PC-9 (cell line): ENCODE measurements at regions of chr6 and their contacts with region 1.

Region 1: DNA sequence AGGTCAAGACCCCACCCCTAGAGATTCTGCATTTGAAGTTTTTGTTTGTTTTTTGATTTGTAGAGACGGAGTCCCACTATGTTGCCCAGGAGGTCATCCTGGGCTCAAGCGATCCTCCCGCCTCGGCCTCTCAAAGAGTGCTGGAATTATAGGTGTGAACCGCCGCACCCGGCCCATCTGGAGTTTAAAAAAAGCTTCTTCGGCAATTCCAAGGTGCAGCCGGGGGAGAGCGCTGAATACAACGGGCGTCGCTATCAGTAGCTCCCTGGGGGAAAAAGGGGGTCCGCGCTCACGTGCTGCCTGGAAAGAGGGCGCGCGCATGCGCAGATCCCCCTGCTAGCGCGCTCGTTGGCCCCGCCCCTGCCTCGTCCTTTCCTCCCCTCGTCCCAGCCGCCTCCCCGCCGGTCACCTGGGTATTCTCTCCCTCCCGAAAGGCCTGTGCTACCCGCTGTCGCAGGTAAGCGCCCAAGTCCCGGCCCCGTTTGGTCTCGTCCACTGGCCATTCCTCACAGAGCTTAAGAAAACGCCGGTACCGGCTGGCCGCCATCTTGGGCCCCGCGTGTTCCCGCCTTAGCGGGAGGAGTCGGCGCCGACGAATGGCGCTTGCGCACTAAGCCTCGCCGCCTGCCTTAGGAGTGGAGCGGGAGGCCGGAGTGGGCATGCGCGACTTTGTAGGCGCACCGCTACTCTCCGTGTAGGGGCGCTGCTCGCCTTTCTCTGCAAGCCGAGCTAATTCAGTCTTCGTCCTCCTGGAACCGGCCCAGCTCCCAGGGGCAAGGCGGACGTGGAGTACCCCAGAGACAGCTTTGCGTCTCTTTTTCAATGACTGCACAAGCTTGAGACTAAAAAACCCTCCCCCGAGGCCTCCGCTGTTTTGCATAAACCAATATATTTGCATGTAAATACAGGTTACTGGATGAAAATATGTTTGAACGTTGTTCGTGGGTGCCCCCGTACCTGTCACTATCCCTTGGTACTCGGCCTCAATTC is at the start of gene UQCC2:
- DNase-seq: peak; percentile 85 to 95
- H3K4me3 ChIP-seq: peak within 1 kb of the TSS; percentile 74
- H3K27ac ChIP-seq: peak within 1 kb of the TSS; percentile 78
- H3K4me1 ChIP-seq: peaks cover 30% of the 10 kb centered on the region
- H3K27me3 ChIP-seq: no peaks in the 10 kb centered on the region
- CTCF ChIP-seq: peak; percentile 76
- total RNA-seq, gene UQCC2: 71.2 and 72.9 TPM in 2 replicates

Region 2: GRCh38 chr6:33566182-33567084 is 145.0 kb before region 1 on chr6:
- CTCF ChIA-PET with region 1: no interaction called
- POLR2A ChIA-PET with region 1: no interaction called
- intact Hi-C with region 1: no loop called
- DNase-seq: no peak
- H3K4me3 ChIP-seq: no peak overlapping the region
- H3K27ac ChIP-seq: no peak overlapping the region
- H3K4me1 ChIP-seq: 0 out of 2 replicates have a peak, but pooled peaks cover 5% of the 10 kb centered on the region
- H3K27me3 ChIP-seq: no peaks in the 10 kb centered on the region
- CTCF ChIP-seq: no peak

Region 3: GRCh38 chr6:33579828-33580714 is 131.4 kb before region 1 on chr6 and contains the start of gene BAK1:
- CTCF ChIA-PET with region 1: no interaction called
- POLR2A ChIA-PET with region 1: interaction called, 10 read pairs
- intact Hi-C with region 1: no loop called
- DNase-seq: peak; percentile 84 to 87
- H3K4me3 ChIP-seq: peak within 1 kb of the TSS; percentile 98
- H3K27ac ChIP-seq: no peak within 1 kb of the TSS
- H3K4me1 ChIP-seq: peaks cover 15% of the 10 kb centered on the region
- H3K27me3 ChIP-seq: no peaks in the 10 kb centered on the region
- CTCF ChIP-seq: peak; percentile 59
- total RNA-seq, gene BAK1: 24.6 and 28.4 TPM in 2 replicates

Region 4: DNA sequence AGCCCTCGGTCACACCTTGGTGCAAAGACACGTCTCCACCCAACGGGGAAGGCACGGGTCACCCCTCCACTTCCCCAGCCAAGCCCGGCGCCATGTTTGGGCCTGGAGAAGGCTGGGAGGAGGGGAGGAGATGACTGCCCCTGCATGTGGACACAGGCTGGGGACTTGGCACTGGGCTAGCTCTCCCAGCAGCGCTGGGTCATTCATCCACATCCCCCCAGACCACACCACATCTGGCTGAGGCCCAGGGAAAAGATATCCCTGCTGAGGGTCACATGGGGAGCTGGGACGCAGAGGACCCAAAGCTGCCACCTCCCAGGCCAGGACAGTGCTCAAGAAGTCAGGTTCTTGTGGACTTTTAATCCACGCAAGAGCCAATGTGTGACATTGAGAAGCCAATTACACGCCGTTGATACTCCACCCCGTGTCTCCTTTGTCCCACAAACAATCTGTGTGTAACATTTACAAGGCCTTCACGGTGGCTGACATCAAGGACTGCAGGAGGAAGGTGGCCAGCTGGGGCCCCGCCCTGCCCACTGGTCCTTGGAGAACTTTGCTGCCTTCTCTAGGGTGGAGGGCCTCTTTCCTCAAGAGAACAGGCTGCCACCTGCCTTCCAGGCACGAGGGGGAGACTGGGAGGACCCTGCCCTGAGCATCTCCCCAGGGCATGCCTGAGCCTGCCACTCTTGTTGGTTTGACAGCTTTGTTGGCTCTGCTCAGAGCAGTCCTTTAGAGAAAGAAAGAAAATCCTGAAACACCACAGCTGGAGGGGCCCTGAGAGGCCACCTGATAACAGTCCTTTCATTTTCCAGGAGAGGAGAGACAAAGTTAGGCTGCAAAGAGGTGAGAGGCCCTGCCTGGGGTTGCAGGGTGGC is 40.6 kb after region 1 on chr6:
- CTCF ChIA-PET with region 1: interaction called, 11 read pairs
- POLR2A ChIA-PET with region 1: no interaction called
- intact Hi-C with region 1: no loop called
- DNase-seq: peak in 1 of 2 experiments; percentile 37
- H3K4me3 ChIP-seq: no peak overlapping the region
- H3K27ac ChIP-seq: no peak overlapping the region
- H3K4me1 ChIP-seq: peaks cover 41% of the 10 kb centered on the region
- H3K27me3 ChIP-seq: no peaks in the 10 kb centered on the region
- CTCF ChIP-seq: no peak

Region 5: DNA sequence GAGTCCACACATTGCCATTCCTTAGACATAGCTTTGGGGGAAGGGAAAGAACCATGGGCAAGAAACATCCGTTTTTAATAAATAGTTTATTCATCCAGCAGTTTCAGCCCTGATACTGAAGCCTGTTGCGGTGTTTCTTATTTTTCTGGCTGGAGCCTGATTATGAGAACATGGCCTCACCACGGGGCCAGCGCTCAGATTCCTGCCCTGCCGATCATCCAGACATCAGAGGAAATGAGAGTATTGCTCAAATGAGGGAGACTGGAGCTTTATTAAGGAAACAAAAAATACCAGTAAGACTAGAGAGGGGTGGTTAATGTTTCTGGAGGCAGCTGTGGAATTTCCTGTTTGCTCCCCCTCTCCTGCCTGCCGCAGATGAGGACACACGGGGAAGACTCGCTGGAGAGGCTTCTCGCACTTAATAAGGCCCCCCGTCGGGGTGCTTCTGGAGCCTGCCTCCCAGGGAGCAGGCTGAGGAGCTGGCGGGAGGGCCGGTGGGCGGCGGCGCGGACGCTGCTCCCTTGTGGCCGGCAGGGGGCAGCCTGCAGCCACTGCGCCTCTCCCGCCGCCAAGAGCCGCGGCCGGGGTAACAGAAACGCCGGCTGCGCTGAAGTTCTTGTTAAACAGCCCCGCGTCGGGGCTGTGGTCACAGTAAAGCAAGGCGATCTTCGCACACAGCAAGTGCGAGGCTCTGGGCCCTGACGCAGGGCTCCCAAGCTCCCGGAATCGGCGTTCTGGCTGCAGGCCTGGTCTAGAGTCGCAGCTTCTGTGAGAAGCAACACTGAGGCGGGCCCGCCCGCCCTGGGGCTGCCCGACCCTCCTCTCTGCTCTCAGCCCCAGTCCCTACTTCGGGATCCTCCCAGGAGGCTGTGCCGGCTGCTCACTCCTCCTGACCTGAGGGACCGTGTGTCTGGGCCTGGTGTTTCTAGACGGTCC is 60.0 kb after region 1 on chr6:
- CTCF ChIA-PET with region 1: interaction called, 16 read pairs
- POLR2A ChIA-PET with region 1: no interaction called
- intact Hi-C with region 1: no loop called
- DNase-seq: peak; percentile 76 to 79
- H3K4me3 ChIP-seq: no peak overlapping the region
- H3K27ac ChIP-seq: 0 out of 2 replicates have a peak overlapping the region, but pooled peaks have one; percentile 15
- H3K4me1 ChIP-seq: peaks cover 19% of the 10 kb centered on the region
- H3K27me3 ChIP-seq: no peaks in the 10 kb centered on the region
- CTCF ChIP-seq: peak; percentile 90

Region 6: GRCh38 chr6:34154668-34155447 is 443.4 kb after region 1 on chr6:
- CTCF ChIA-PET with region 1: interaction called, 9 read pairs
- POLR2A ChIA-PET with region 1: no interaction called
- intact Hi-C with region 1: loop called (anchors 2 kb)
- DNase-seq: peak in 1 of 2 experiments; percentile 50
- H3K4me3 ChIP-seq: peak overlapping the region; percentile 39; the same call in 1 of the 2 replicates
- H3K27ac ChIP-seq: no peak overlapping the region
- H3K4me1 ChIP-seq: no peaks in the 10 kb centered on the region
- H3K27me3 ChIP-seq: peaks cover 42% of the 10 kb centered on the region
- CTCF ChIP-seq: peak; percentile 96